Mammary epithelial cell (primary cell): ENCODE measurements at regions of chr9 and their contacts with region 1.

Region 1: DNA sequence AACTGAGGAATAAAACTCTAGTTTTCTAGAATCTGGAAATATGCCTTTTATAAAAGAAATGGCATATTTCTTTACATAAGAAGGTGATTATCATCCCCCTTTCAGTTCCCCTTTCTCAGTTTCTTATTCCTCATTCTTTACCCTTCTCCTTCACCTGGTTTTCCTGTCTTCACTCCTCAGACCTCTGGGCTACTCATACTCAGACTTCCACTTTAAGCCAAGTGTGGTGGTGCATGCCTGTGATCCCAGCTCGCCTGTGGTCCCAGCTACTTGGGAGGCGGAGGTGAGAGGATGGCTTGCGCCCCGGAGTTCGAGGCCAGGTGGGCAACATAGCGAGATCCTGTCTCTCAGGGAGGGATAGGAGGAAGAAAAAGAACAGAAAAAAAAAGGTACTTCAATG is 57.2 kb downstream of the RANBP6 start:
- DNase-seq: no peak
- H3K4me3 ChIP-seq: no peak overlapping the region
- H3K27ac ChIP-seq: no peak overlapping the region
- H3K4me1 ChIP-seq: no peaks in the 10 kb centered on the region
- H3K27me3 ChIP-seq: no peaks in the 10 kb centered on the region
- CTCF ChIP-seq: no peak

Region 2: GRCh38 chr9:5764130-5764868 is 194.0 kb before region 1 on chr9:
- CTCF ChIA-PET with region 1: no interaction called
- dilution Hi-C with region 1: no loop called
- in situ Hi-C with region 1: no loop called
- intact Hi-C with region 1: no loop called
- DNase-seq: no peak
- H3K4me3 ChIP-seq: no peak overlapping the region
- H3K27ac ChIP-seq: no peak overlapping the region
- H3K4me1 ChIP-seq: no peaks in the 10 kb centered on the region
- H3K27me3 ChIP-seq: no peaks in the 10 kb centered on the region
- CTCF ChIP-seq: no peak

Region 3: GRCh38 chr9:5909976-5910375 is 48.3 kb before region 1 on chr9:
- CTCF ChIA-PET with region 1: no interaction called
- dilution Hi-C with region 1: no loop called
- in situ Hi-C with region 1: no loop called
- intact Hi-C with region 1: loop called (anchors 2 kb)
- DNase-seq: peak; percentile 58
- H3K4me3 ChIP-seq: no peak overlapping the region
- H3K27ac ChIP-seq: no peak overlapping the region
- H3K4me1 ChIP-seq: peaks cover 6% of the 10 kb centered on the region
- H3K27me3 ChIP-seq: no peaks in the 10 kb centered on the region
- CTCF ChIP-seq: no peak

Region 4: GRCh38 chr9:6008169-6008979 is 50.1 kb after region 1 on chr9:
- CTCF ChIA-PET with region 1: no interaction called
- dilution Hi-C with region 1: no loop called
- in situ Hi-C with region 1: no loop called
- intact Hi-C with region 1: no loop called
- DNase-seq: peak; percentile 94
- H3K4me3 ChIP-seq: peak overlapping the region; percentile 58 to 94 (median 76)
- H3K27ac ChIP-seq: peak overlapping the region; percentile 70
- H3K4me1 ChIP-seq: peaks cover 21% of the 10 kb centered on the region
- H3K27me3 ChIP-seq: no peaks in the 10 kb centered on the region
- CTCF ChIP-seq: no peak

Region 5: DNA sequence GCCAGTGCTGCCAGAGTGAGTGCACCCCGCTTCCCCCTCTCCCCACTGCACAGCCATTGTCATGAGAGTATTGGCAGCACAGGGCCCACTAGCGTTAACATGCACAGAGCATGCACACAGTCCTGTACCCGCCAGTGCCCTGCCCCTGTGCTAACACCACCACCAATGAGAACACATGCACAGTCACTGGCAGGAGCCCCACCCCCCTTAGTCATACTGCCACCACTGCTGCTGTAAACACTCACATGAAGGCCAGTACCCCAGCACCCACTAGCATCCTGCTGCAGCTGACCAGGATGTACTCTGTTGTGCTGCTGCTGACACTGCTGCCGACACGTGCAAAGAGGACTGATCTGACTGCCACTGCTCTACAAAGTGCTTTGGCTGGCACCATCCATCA is 76.7 kb after region 1 on chr9:
- CTCF ChIA-PET with region 1: no interaction called
- dilution Hi-C with region 1: no loop called
- in situ Hi-C with region 1: no loop called
- intact Hi-C with region 1: no loop called
- DNase-seq: peak; percentile 17
- H3K4me3 ChIP-seq: no peak overlapping the region
- H3K27ac ChIP-seq: no peak overlapping the region
- H3K4me1 ChIP-seq: no peaks in the 10 kb centered on the region
- H3K27me3 ChIP-seq: no peaks in the 10 kb centered on the region
- CTCF ChIP-seq: no peak